ENCODE measurements at regions of chr19 and their contacts with region 1.

Region 1: GRCh38 chr19:52527134-52527955 is at the start of gene ZNF808:
- DNase-seq: peak; percentile 87
- H3K4me3 Mint-ChIP-seq: peak within 1 kb of the TSS; percentile 99
- H3K27ac Mint-ChIP-seq: peak within 1 kb of the TSS; percentile 98
- H3K4me1 Mint-ChIP-seq: peaks cover 12% of the 10 kb centered on the region
- H3K27me3 Mint-ChIP-seq: no peaks in the 10 kb centered on the region
- total RNA-seq, gene ZNF808: 19.1 and 20.0 TPM in 2 replicates

Region 2: GRCh38 chr19:52139252-52140031 is 387.9 kb before region 1 on chr19 and contains the start of gene ZNF616:
- intact Hi-C with region 1: loop called (anchors 5 kb)
- DNase-seq: peak; percentile 94
- H3K4me3 Mint-ChIP-seq: peak within 1 kb of the TSS; percentile 98
- H3K27ac Mint-ChIP-seq: peak within 1 kb of the TSS; percentile 94
- H3K4me1 Mint-ChIP-seq: peaks cover 23% of the 10 kb centered on the region
- H3K27me3 Mint-ChIP-seq: no peaks in the 10 kb centered on the region
- total RNA-seq, gene ZNF616: 4.1 and 6.7 TPM in 2 replicates

Region 3: DNA sequence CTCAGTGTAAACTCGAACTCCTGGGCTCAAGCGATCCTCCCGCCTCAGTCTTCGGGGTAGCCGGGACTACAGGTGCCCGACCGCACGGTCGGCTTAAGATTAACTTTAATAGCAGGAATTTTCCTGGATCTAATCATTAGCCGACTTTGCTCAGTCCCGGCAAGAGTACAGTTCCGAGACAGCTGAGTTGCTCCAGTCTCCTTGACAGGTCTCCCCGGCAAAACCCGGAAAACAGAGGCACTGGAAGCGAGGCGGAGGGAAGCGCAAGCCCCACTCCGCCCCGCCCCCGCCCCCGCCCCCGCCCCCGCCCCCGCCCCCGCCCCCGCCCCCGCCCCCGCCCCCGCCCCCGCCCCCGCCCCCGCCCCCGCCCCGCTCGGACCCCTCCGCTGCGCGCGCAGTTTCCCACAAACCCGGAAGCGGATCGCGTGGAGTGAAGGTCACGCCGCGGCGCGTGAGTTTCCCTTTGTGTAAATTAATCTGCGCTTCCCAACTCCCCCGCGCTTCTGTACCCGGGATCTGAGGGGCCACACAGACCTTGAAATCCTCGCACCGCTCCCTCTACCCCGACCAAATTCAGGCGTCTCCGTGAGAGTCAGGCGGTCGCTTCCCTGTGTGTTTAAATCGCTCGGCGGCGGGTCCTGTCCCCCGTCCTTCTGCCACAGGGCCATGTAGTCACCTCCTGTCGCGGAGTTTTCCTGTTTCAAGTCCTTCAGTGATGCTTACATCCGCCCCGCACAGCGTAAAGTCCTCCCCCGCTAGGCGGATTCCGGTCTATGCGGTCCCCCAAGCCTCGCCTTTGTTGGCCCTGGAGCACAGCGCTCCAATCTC is 230.4 kb before region 1 on chr19 and contains the start of gene ZNF480:
- intact Hi-C with region 1: loop called (anchors 5 kb)
- DNase-seq: peak; percentile 74
- H3K4me3 Mint-ChIP-seq: peak within 1 kb of the TSS; percentile 90
- H3K27ac Mint-ChIP-seq: peak within 1 kb of the TSS; percentile 97
- H3K4me1 Mint-ChIP-seq: peaks cover 17% of the 10 kb centered on the region
- H3K27me3 Mint-ChIP-seq: peaks cover 2% of the 10 kb centered on the region
- total RNA-seq, gene ZNF480: 3.5 and 4.8 TPM in 2 replicates

Region 4: DNA sequence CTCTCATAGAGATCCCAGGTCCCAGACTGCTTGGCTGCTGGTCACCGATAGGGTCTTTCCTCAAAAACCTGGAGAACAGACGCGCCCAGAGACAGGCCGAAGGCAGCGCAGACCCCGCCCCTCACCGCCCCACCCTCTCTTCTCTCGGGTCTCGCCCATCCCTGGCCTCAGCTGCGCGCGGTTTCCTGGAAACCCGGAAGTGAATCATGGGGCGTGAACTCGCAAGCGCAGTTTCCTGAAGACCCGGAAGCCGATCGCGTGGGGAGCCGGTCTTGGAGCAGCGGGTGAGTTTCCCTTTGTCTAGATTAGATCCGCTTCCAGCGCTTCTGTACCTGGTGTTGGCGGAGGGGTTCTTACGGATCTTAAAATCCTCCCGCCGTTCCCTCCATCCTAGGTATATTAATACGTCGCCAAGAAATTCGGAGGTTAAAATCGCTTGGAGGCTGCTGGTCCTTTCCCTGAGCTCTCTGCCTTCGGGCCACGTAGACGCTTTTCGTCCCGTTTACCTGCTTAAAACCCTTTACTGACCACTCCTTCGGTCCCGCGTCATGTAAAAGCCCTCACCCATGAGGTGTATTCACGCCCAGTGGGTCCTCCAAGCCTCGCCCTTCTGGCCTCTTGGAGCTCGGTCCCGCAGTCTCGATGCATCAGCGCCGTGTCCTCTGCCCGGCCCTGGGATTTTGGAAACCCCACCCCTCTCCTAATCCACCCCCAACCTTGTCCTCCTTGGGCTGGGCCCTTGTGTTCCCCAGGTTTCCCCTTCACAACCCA is 73.8 kb before region 1 on chr19 and contains the start of gene ZNF578:
- intact Hi-C with region 1: no loop called
- DNase-seq: peak; percentile 6
- H3K4me3 Mint-ChIP-seq: peak within 1 kb of the TSS; percentile 58
- H3K27ac Mint-ChIP-seq: no peak within 1 kb of the TSS
- H3K4me1 Mint-ChIP-seq: no peaks in the 10 kb centered on the region
- H3K27me3 Mint-ChIP-seq: no peaks in the 10 kb centered on the region
- total RNA-seq, gene ZNF578: 0.05 and 0.07 TPM in 2 replicates

Region 5: DNA sequence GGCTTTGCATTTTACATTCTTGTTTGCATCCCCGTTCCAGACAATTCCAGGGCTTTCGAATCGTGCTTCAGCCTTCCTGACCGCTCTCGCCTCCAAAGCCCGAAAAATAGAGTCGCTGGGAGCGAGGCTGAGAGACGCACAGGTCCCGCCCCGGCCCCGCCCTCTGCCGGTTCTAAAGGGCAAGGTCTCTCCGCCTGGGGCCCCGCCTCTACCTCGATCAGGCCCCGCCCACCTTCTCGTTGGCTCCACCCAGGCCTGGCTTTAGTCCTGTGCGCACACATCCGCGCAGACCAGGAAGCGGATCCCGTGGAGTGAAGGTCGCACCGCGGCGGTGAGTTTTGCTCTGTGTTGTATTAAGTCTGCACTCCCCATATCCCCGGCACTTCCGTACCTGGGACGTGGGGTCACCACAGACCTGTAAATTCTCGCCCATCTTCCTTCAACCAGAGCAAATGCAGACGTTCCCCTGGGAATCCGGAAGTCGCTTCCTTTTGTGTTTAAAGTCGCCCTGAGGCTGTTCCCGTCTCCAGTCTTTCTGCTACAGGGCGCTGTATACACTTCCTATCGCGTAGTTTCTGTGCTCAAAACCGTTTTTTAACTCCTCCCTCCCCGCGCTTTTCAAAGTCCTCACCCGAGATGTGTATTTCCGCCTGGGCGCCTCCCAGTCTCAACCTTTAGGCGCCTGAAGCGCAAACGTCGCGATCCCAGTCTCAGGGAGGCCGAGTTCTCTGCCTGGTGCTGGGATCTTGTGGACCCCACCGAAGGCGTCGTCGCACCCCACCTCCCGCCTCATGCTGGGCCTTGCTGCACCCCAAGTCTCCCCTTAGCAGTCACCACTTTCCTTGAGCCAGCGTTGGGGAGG is 42.9 kb after region 1 on chr19 and contains the start of gene ZNF701:
- intact Hi-C with region 1: loop called (anchors 1 kb)
- DNase-seq: peak; percentile 94
- H3K4me3 Mint-ChIP-seq: peak within 1 kb of the TSS; percentile 94
- H3K27ac Mint-ChIP-seq: peak within 1 kb of the TSS; percentile 94
- H3K4me1 Mint-ChIP-seq: peaks cover 20% of the 10 kb centered on the region
- H3K27me3 Mint-ChIP-seq: no peaks in the 10 kb centered on the region
- total RNA-seq, gene ZNF701: 16.0 and 18.3 TPM in 2 replicates

Region 6: DNA sequence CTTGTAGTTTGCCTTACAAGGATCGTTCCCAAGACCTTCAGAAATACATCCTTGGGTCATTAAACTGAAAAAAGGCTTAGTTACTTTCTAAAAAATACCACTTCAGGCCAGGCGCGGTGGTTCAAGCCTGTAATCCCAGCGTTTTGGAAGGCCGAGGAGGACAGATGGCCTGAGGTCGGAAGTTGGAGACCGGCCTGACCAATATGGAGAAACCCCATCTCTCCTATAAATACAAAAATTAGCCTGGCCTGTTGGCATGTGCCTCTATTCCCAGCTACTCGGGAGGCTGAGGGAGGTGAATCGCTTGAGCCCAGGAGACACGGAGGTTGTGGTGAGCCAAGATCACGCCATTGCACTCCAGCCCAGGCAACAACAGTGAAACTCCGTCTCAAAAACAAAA is 296.3 kb after region 1 on chr19:
- intact Hi-C with region 1: loop called (anchors 1 kb)
- DNase-seq: no peak
- H3K4me3 Mint-ChIP-seq: no peak overlapping the region
- H3K27ac Mint-ChIP-seq: no peak overlapping the region
- H3K4me1 Mint-ChIP-seq: peaks cover 9% of the 10 kb centered on the region
- H3K27me3 Mint-ChIP-seq: no peaks in the 10 kb centered on the region

Region 7: DNA sequence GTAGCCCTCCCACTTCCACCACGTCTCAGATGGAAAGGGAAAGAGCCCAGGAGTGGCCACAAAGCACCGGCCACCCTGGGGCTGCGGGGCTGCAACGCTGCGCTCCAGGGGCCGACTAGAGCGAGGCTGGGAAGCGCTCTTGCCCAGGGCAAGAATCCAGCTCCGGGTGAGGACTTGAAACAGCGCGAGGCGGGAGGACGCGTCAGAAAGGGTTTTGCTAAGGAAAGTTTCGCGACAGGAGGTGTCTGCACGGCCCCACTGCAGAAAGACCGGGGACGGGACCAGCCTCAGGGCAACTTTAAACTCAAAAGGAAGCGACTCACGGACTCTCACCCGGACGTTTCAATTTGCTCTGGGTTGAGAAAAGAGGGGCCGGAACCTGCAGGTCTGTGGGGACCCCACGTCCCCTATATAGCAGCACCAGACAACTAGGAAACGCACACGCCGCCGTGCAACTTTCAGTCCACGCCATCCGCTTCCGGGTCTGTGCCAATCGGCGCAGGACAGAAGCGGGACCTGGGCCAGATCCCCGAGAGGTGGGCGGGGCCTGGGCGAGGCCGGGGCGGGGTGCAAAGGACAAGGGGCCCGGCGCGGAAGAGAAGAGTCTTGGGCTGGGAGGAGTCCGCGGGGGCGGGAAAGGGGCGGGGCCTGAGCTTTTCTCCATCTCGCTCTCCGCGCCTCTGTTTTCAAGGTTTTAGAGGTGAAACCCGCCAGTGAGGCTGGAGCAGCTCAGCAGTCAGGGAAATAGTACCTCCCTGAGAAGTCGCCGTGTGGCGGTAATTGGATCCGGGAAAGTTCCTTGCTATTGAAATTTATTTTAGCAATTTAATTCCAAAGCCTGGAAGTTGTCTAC is 435.3 kb after region 1 on chr19 and contains the start of gene ZNF816:
- intact Hi-C with region 1: loop called (anchors 1 kb)
- DNase-seq: peak; percentile 99
- H3K4me3 Mint-ChIP-seq: peak within 1 kb of the TSS; percentile 98
- H3K27ac Mint-ChIP-seq: peak within 1 kb of the TSS; percentile 93
- H3K4me1 Mint-ChIP-seq: peaks cover 25% of the 10 kb centered on the region
- H3K27me3 Mint-ChIP-seq: no peaks in the 10 kb centered on the region
- total RNA-seq, gene ZNF816: 7.0 and 9.4 TPM in 2 replicates